ENCODE measurements at regions of chr12 and their contacts with region 1.

Region 1: GRCh38 chr12:11486623-11487444 is 91.5 kb upstream of the PRB2 start:
- DNase-seq: peak; percentile 88
- H3K4me3 Mint-ChIP-seq: no peak overlapping the region
- H3K27ac Mint-ChIP-seq: no peak overlapping the region
- H3K4me1 Mint-ChIP-seq: peaks cover 9% of the 10 kb centered on the region
- H3K27me3 Mint-ChIP-seq: peaks cover 47% of the 10 kb centered on the region
- CTCF ChIP-seq: peak; percentile 97

Region 2: DNA sequence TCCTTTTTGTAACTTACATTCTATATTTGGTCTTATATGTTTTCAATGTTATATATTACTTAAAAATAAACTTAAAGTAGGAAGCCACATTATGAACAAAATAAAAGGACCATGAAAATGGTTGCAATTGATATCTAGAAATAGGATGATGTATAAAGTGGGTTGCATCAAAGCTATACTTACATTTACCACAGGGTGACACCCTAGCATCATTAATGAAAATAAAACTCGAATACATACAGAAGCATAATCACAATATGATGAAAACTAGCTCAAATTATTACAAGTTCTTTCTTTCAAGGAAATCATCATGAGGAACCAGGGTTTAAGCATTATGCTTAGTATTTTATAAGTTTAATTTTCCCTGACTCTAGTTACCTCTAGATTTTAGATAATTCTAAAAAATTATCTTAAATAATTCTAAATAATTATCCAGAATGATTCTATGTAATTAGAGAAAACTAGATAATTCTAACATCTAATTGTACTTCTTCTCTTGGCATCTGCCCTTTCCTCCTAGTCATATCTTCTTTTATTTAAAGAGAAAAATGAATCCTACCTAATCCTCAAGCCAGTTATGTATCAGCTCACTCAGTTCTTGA is 715.6 kb before region 1 on chr12:
- CTCF ChIA-PET with region 1: interaction called, 99 read pairs
- POLR2A ChIA-PET with region 1: interaction called, 7 read pairs
- intact Hi-C with region 1: loop called (anchors 1 kb)
- DNase-seq: peak; percentile 56
- H3K4me3 Mint-ChIP-seq: no peak overlapping the region
- H3K27ac Mint-ChIP-seq: no peak overlapping the region
- H3K4me1 Mint-ChIP-seq: no peaks in the 10 kb centered on the region
- H3K27me3 Mint-ChIP-seq: peaks cover 94% of the 10 kb centered on the region
- CTCF ChIP-seq: peak; percentile 68

Region 3: GRCh38 chr12:11209108-11209507 is 277.7 kb before region 1 on chr12:
- CTCF ChIA-PET with region 1: interaction called, 10 read pairs
- POLR2A ChIA-PET with region 1: no interaction called
- intact Hi-C with region 1: no loop called
- DNase-seq: no peak
- H3K4me3 Mint-ChIP-seq: no peak overlapping the region
- H3K27ac Mint-ChIP-seq: no peak overlapping the region
- H3K4me1 Mint-ChIP-seq: no peaks in the 10 kb centered on the region
- H3K27me3 Mint-ChIP-seq: no peaks in the 10 kb centered on the region
- CTCF ChIP-seq: no peak

Region 4: DNA sequence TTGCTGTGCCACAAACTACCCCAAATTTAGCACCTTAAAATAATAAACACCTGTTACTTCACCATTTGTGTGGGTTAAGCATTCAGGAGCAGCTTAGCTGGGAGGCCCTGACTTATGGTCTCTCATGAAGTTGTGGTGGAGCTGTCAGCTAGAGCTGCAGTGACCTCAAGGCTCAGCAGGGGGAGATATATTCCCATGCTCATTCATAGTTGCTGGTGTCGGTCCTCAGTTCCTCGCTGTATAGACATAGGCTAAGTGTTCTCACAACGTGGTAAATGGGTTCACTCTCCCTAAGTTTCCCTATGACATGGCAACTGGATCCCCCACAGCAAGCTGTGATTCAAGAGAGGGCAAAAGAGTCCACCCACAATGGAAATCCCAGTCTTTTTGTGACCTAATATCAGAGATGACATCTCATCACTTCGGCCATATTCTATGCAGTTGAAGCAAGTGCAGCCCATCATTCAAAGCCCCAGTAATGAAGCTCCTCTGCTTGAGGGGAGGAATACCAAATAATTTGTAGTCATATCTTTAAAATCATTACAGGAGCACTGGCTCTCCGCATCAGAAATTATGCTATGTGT is 258.4 kb before region 1 on chr12:
- CTCF ChIA-PET with region 1: interaction called, 243 read pairs
- POLR2A ChIA-PET with region 1: interaction called, 6 read pairs
- intact Hi-C with region 1: loop called (anchors 1 kb)
- DNase-seq: peak; percentile 67
- H3K4me3 Mint-ChIP-seq: no peak overlapping the region
- H3K27ac Mint-ChIP-seq: no peak overlapping the region
- H3K4me1 Mint-ChIP-seq: no peaks in the 10 kb centered on the region
- H3K27me3 Mint-ChIP-seq: peaks cover 79% of the 10 kb centered on the region
- CTCF ChIP-seq: peak; percentile 86

Region 5: GRCh38 chr12:11242656-11243055 is 244.2 kb before region 1 on chr12:
- CTCF ChIA-PET with region 1: interaction called, 24 read pairs
- POLR2A ChIA-PET with region 1: no interaction called
- intact Hi-C with region 1: no loop called
- DNase-seq: no peak
- H3K4me3 Mint-ChIP-seq: no peak overlapping the region
- H3K27ac Mint-ChIP-seq: no peak overlapping the region
- H3K4me1 Mint-ChIP-seq: no peaks in the 10 kb centered on the region
- H3K27me3 Mint-ChIP-seq: peaks cover 23% of the 10 kb centered on the region
- CTCF ChIP-seq: no peak

Region 6: DNA sequence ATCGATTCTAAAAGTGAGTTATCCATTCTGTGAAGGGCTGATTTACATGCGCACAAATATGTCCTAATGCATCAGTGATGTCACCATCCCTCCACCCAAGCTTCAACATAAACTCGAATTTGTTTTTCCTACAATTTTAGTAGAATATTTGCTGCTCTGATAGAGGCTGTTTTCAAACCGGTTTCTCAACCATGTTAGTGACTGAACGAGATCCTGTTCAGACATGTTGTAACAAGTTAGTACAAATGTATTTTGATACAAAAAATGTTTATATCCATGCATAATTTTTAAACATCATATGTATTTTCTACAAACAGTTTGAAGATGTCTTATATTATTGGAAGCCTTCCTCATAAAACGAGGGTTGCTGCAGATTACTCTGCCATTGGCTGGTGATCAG is 78.7 kb before region 1 on chr12:
- CTCF ChIA-PET with region 1: interaction called, 10 read pairs
- POLR2A ChIA-PET with region 1: no interaction called
- intact Hi-C with region 1: no loop called
- DNase-seq: peak; percentile 2
- H3K4me3 Mint-ChIP-seq: no peak overlapping the region
- H3K27ac Mint-ChIP-seq: no peak overlapping the region
- H3K4me1 Mint-ChIP-seq: no peaks in the 10 kb centered on the region
- H3K27me3 Mint-ChIP-seq: no peaks in the 10 kb centered on the region
- CTCF ChIP-seq: no peak

Region 7: GRCh38 chr12:11497995-11498394 is 11.2 kb after region 1 on chr12:
- CTCF ChIA-PET with region 1: interaction called, 18 read pairs
- POLR2A ChIA-PET with region 1: no interaction called
- intact Hi-C with region 1: no loop called
- DNase-seq: no peak
- H3K4me3 Mint-ChIP-seq: no peak overlapping the region
- H3K27ac Mint-ChIP-seq: no peak overlapping the region
- H3K4me1 Mint-ChIP-seq: no peaks in the 10 kb centered on the region
- H3K27me3 Mint-ChIP-seq: peaks cover 62% of the 10 kb centered on the region
- CTCF ChIP-seq: no peak